BJ (cell line): ENCODE measurements at regions of chr2 and their contacts with region 1.

Region 1: GRCh38 chr2:43083710-43084698 is 142.4 kb downstream of the ZFP36L2 start:
- DNase-seq: peak; percentile 59
- H3K4me3 ChIP-seq: no peak overlapping the region
- H3K27me3 ChIP-seq: no peaks in the 10 kb centered on the region
- CTCF ChIP-seq: no peak

Region 2: GRCh38 chr2:43105586-43106558 is 21.9 kb after region 1 on chr2:
- CTCF ChIA-PET with region 1: interaction called, 10 read pairs
- POLR2A ChIA-PET with region 1: interaction called, 6 read pairs
- DNase-seq: no peak
- H3K4me3 ChIP-seq: no peak overlapping the region
- H3K27me3 ChIP-seq: no peaks in the 10 kb centered on the region
- CTCF ChIP-seq: peak; percentile 64